ENCODE measurements at regions of chr22 and their contacts with region 1.

Region 1: DNA sequence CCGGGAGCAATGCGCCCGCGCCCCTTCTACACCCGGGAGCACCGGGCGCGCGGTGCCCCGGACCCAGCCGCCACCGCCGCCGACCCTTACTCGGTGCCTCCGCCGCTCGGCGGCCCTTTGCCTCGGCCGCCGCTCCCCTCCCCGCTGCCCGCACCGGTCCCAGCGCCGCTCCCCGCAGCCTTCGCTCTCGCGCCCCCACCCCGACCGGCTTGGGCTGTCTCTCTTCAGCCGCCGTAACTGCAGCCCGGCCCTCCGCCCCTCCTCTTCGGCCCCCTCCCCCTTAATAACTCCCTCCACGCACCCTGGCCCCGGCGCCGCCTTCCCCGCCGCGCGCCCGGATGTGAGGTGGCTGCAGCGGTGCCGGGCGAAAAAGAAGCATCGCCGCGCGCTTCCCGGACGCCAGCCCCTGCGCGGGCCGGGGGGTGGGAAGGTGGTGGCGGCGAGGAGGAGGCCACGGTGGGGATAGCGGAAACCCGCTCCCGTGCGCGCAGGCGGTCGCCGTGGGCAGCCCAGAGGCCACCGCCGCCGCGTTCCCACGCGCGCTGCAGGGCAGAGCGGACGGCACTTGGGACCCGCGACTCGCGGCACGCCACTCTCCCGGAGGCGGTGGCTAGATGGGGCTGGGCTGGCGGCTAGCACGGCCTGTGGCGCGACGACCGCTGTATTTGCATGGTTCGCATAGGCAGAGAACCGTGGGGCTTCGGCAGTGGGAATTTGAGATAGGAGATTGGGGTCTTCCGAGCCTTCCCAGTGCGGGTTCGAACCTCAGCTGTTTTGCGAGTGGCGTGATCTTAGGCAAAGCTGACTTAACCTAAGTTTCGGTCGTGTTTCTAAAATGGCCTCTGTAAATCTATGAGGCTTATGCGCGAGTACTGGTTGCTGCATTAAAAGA is at the start of gene EIF4ENIF1:
- DNase-seq: peak; percentile 94
- ATAC-seq: peak; percentile 95
- total RNA-seq, gene EIF4ENIF1: 30.5 TPM

Region 2: GRCh38 chr22:31399211-31400028 is 90.4 kb before region 1 on chr22 and contains the start of gene DRG1:
- intact Hi-C with region 1: loop called (anchors 5 kb)
- DNase-seq: peak; percentile 98
- ATAC-seq: peak; percentile 100
- total RNA-seq, gene DRG1: 59.3 TPM

Region 3: GRCh38 chr22:31439808-31440207 is 50.0 kb before region 1 on chr22:
- intact Hi-C with region 1: no loop called
- DNase-seq: peak; percentile 69
- ATAC-seq: peak; percentile 87

Region 4: DNA sequence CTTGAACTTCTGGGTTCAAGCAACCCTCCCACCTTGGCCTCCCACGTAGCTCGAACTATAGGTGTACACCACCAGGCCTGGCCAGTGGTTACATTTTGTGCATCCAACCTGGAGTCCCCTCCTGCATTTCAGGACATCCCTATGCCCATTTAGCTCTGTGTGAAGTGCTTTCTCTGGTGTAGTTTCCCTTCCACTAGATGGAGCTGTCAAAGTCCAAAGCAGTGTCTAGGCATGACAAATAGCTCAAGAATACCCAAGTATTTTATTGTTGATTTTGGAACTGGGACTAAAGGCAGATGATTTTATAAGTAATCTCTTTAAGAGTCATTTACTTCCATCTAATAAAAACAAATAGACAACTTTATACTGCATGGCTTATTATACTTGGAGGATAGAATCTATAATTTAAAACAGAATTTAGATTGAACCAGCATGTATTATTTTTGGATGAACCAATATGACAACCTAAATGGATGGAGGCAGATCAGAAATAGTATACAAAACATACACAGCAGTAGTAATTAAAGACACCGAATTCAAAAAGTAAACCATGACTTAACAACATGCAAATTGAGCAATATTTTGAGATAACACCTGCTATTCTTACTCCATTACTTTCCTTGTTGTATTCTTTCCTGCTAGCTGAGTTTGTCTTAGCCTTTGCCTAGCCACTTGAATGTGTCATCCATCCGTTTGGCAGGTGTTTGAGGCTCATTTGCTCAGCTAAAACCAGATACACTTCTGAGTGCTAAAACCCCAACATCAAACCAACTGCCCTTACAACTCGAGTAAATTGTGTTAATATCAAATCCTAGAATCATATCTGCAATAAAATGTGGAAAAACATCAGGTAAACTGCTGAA is 37.9 kb before region 1 on chr22:
- intact Hi-C with region 1: loop called (anchors 5 kb)
- DNase-seq: no peak
- ATAC-seq: no peak

Measured in Right ventricle myocardium inferior (tissue), 1 donor.